MCF 10A (cell line): ENCODE measurements at regions of chr1 and their contacts with region 1.

Region 1: DNA sequence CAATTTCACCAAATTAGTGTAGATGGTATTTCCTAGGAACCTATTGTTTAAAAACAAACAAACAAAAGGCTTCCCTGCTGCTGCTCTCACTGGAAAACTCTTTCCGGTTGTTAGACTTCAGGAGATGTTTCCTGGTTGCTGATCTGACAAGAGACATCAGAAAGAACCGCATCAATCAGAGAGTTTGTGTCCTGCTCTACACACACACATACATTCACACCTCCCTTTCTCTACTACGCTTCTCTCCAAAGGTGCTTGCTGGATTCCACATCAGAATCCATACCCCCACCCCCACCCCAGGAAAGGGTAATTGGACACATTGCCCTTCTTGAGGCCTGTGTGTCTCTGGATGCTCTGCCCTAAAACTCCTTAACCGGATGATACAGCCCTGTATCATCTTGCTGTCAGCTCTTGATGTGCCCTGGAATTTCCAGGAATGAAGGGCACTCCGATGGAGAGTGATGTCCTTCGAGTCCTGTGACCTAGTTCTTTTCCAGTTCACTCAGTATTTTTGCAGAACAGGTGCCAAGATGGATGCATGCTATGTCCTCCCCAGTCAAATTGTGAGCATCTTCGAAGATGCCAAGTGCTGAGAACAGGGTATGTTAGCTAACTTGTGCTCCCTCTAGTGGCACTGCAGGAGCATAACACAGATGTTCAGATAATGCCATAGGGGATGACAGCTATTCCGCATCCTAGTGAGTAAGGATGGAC is 113.7 kb upstream of the SLC35F3 start:
- DNase-seq: peak; percentile 84
- H3K4me3 Mint-ChIP-seq: no peak overlapping the region
- H3K27ac Mint-ChIP-seq: no peak overlapping the region
- H3K4me1 Mint-ChIP-seq: no peaks in the 10 kb centered on the region
- H3K27me3 Mint-ChIP-seq: no peaks in the 10 kb centered on the region
- CTCF ChIP-seq: peak; percentile 100

Region 2: DNA sequence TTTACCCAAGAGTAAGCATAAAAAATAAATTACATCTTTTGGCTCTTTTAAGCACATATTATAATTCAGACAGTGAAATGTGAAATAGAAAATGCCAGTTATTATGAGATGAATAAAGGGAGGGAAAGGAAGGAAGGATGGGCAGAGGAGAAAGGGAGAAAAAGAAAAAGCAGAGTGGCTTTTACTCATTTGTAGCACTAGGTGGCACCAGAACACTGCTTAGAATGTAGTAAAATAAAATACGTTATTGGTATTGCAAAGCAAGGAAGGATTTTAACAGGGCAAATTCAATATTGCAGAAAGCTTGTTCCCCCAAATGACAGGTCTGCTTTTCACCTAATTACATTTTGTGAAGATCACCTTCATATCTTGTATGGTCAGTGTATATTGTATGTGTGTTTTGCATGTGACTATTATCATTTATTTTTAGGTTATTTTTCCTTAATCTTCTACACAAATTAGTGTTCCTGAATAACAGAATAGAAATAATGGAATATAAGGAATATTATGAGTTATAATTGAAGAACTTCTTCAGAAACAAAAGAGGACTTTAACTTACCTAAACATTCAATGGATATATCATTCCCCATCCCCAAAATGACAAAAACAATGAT is 486.2 kb before region 1 on chr1:
- CTCF ChIA-PET with region 1: interaction called, 9 read pairs
- POLR2A ChIA-PET with region 1: no interaction called
- intact Hi-C with region 1: loop called (anchors 1 kb)
- DNase-seq: peak; percentile 63
- H3K4me3 Mint-ChIP-seq: no peak overlapping the region
- H3K27ac Mint-ChIP-seq: no peak overlapping the region
- H3K4me1 Mint-ChIP-seq: no peaks in the 10 kb centered on the region
- H3K27me3 Mint-ChIP-seq: no peaks in the 10 kb centered on the region
- CTCF ChIP-seq: peak; percentile 98

Region 3: GRCh38 chr1:233394860-233395717 is 395.7 kb before region 1 on chr1:
- CTCF ChIA-PET with region 1: interaction called, 26 read pairs
- POLR2A ChIA-PET with region 1: interaction called, 4 read pairs
- intact Hi-C with region 1: loop called (anchors 1 kb)
- DNase-seq: peak; percentile 81
- H3K4me3 Mint-ChIP-seq: no peak overlapping the region
- H3K27ac Mint-ChIP-seq: no peak overlapping the region
- H3K4me1 Mint-ChIP-seq: no peaks in the 10 kb centered on the region
- H3K27me3 Mint-ChIP-seq: no peaks in the 10 kb centered on the region
- CTCF ChIP-seq: peak; percentile 98

Region 4: GRCh38 chr1:233477359-233477758 is 313.5 kb before region 1 on chr1:
- CTCF ChIA-PET with region 1: interaction called, 7 read pairs
- POLR2A ChIA-PET with region 1: interaction called, 3 read pairs
- intact Hi-C with region 1: loop called (anchors 1 kb)
- DNase-seq: peak; percentile 23
- H3K4me3 Mint-ChIP-seq: no peak overlapping the region
- H3K27ac Mint-ChIP-seq: no peak overlapping the region
- H3K4me1 Mint-ChIP-seq: peaks cover 31% of the 10 kb centered on the region
- H3K27me3 Mint-ChIP-seq: no peaks in the 10 kb centered on the region
- CTCF ChIP-seq: peak; percentile 30

Region 5: DNA sequence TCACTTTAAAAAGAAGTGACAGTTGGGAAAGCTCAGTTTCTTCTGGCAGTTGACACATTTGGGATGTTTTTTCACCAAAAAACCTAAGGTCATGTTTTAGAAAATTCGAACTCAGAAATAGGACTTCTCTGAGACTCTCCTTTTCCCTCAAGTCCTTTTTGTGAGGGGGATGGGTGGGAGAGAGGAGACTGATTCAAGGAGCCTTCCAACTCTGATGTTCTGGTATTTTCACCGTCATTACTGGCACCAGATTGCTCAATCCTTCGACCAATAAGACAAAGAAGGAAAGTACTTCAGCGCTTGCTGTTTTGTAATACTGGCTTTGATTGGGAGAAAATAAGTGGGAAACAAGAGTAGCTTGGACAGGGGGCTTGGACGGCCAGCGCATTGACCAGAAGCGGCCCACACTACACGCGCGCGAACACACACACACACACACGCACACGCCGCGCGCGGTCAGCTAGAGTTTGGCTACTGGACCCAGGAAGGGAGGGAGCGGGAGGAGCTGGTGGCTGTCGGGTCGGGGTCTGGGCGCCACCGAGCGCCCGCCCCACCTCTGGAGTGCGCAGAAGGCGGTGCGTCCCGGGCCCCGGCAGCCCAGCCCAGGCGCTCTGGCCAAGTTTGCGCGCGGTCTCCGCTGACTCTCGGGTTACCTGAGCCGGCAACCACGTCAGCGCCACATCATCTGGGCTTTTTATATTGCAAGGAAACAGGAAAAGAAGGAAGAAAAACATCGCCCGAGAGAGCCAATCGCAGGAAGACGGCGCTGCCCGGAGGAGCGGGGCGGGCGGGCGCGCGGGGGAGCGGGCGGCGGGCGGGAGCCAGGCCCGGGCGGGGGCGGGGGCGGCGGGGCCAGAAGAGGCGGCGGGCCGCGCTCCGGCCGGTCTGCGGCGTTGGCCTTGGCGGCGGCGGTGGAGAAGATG is 177.3 kb before region 1 on chr1 and contains the start of gene KCNK1:
- CTCF ChIA-PET with region 1: interaction called, 3 read pairs
- POLR2A ChIA-PET with region 1: interaction called, 8 read pairs
- intact Hi-C with region 1: loop called (anchors 1 kb)
- DNase-seq: peak; percentile 97
- H3K4me3 Mint-ChIP-seq: peak within 1 kb of the TSS; percentile 88
- H3K27ac Mint-ChIP-seq: peak within 1 kb of the TSS; percentile 96
- H3K4me1 Mint-ChIP-seq: peaks cover 23% of the 10 kb centered on the region
- H3K27me3 Mint-ChIP-seq: peaks cover 12% of the 10 kb centered on the region
- CTCF ChIP-seq: no peak
- total RNA-seq, gene KCNK1: 24.3 and 41.3 TPM in 2 replicates

Region 6: DNA sequence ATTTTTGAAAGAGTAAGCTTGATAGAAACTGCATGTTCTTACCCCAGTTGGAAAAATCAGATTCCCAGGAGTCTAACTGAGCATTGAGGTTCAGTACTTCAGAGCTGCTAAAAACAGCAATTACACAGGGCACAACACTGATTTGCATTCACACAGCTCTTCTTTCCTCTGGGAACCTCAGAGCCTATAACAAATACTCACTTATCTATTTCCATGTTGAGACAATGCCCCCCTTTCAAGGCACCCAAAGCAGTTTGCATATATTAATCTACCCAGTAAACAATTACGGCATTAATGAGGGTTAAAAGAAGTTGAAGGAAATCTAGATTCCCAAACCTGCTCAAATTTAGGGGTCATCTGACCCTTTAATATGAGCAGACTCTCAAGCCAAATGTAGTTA is 13.3 kb before region 1 on chr1:
- CTCF ChIA-PET with region 1: interaction called, 16 read pairs
- POLR2A ChIA-PET with region 1: no interaction called
- intact Hi-C with region 1: no loop called
- DNase-seq: no peak
- H3K4me3 Mint-ChIP-seq: no peak overlapping the region
- H3K27ac Mint-ChIP-seq: no peak overlapping the region
- H3K4me1 Mint-ChIP-seq: no peaks in the 10 kb centered on the region
- H3K27me3 Mint-ChIP-seq: no peaks in the 10 kb centered on the region
- CTCF ChIP-seq: no peak

Region 7: DNA sequence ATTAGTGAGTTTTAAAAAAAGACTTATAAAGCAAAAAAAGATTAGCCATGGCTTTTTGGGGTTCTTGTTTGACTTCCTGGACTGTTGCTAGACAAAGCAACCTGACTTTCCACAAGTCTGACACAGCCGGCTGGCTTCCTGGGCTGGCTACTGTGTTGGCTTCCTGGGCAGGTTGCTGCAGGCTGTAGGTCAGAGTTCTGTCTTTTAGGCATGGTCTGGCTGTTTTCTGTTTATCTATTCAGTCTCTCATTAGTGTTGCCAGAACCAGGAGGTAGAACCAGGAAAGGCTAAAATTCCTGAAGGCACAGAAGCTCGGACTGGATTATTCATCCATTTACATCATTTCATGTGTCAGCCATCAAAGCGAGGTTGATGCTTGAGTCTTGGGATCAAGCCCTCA is 25.0 kb after region 1 on chr1:
- CTCF ChIA-PET with region 1: no interaction called
- POLR2A ChIA-PET with region 1: no interaction called
- intact Hi-C with region 1: no loop called
- DNase-seq: no peak
- H3K4me3 Mint-ChIP-seq: no peak overlapping the region
- H3K27ac Mint-ChIP-seq: no peak overlapping the region
- H3K4me1 Mint-ChIP-seq: no peaks in the 10 kb centered on the region
- H3K27me3 Mint-ChIP-seq: peaks cover 45% of the 10 kb centered on the region
- CTCF ChIP-seq: no peak

Region 8: DNA sequence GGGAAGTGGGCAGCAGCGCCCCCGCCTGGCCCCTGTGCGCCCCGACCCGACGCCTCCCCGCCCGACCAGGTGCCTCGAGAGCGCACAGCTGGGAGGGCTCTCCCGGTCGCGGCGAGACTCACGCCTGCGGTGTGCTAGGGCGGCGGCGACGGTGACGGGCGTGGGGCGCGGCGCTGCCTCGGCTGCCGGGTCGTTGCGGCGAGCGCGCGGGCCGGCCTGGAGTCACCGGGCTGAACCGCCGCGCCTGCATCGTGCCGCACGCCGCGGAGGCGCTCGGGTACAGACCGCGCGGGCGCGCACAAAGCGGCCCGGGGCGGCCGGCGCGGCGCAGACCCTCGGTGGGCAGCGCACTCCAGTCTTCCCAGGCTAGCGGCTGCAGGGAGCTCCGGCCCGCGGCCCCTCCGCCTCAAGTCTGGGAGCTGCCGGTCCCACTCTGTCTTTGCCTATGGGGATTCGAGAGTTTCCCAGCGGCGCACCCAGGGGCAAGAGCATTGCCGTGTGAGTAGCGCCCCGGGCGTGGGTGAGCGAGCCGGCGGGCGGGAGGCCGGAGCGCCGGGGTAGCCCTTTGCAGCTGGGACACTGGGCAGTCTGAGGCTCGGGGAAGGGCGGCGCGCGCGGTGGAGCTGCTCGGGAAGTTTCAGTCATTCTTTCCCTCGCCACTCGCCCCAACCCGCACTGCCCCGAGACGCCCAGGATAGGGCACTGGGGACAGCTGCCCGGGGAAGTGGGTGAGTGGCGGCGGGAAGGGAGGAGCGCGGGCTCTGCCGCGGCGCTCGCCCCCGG is 114.0 kb after region 1 on chr1 and contains the start of gene SLC35F3:
- CTCF ChIA-PET with region 1: interaction called, 3 read pairs
- POLR2A ChIA-PET with region 1: interaction called, 3 read pairs
- intact Hi-C with region 1: loop called (anchors 2 kb)
- DNase-seq: peak; percentile 87
- H3K4me3 Mint-ChIP-seq: peak within 1 kb of the TSS; percentile 78
- H3K27ac Mint-ChIP-seq: peak within 1 kb of the TSS; percentile 9
- H3K4me1 Mint-ChIP-seq: peaks cover 22% of the 10 kb centered on the region
- H3K27me3 Mint-ChIP-seq: peaks cover 11% of the 10 kb centered on the region
- CTCF ChIP-seq: peak; percentile 91
- total RNA-seq, gene SLC35F3: 2.9 and 3.3 TPM in 2 replicates